ENCODE measurements at regions of chr9 and their contacts with region 1.

Region 1: DNA sequence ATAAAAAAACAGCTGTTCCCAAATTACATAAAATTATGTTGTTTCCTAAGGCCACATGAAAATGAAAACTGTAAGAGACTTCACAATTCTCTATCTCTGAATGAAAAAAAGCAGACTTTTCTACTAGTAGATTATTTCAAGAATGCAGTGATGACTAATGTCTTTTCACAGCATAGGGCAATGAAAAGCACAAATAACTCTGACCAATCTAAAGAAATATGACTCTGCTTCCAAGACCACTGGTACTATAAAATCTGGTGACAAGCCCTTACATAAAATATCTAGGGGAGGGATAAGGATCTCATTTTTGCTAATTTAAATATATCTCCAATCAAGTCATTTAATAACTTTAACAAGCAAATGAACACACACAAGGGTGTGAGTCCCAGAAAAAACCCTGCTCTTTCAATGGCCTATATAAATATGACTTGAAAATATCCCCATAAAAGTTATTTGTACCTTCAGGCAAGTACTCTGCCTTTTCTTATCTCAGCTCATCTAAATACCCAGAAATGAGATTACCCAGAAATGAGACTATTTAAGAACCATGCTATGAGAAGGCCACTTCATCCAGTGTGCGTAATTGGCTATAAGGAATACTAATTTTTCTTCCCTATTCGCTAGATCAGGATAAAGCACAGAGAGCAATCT is 105.2 kb downstream of the GNAQ start:
- DNase-seq: no peak
- H3K4me3 ChIP-seq: no peak overlapping the region
- H3K27ac ChIP-seq: no peak overlapping the region
- H3K4me1 ChIP-seq: peaks cover 5% of the 10 kb centered on the region
- H3K27me3 ChIP-seq: no peaks in the 10 kb centered on the region
- CTCF ChIP-seq: no peak
- EP300 ChIP-seq: no peak
- POLR2A ChIP-seq: no peak

Region 2: DNA sequence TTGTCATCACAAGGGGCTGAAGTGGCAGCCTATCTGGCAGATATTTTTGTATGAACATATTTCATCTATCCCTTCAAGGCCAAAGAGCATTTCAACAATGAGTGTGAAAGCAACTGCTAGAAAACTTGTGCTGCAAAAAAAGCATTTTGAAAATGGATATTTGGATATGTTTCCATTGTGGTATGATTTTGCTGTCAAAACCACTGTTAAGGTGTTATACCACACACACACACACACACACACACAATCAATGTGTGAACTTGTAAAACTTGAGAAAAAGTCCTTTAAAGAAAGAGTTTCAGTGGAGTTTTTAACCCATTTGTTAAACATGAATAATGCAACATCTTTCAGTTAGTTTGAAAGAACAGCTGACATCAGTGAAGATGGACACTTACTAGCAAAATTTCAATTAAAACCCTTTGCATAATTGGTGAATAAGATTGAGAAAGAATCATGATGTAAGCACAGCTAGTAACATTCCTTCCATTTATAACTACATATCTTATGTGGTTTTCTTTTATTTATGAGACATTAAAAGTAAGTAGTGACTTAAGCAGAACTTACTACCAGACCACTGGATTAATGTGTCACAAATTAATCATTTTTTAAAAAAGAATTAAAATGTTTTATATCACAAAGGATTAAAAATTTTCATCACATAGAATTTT is 95.7 kb before region 1 on chr9:
- intact Hi-C with region 1: no loop called
- DNase-seq: no peak
- H3K4me3 ChIP-seq: no peak overlapping the region
- H3K27ac ChIP-seq: peak overlapping the region in 1 of 2 donors; percentile 31
- H3K4me1 ChIP-seq: peaks cover 14% of the 10 kb centered on the region
- H3K27me3 ChIP-seq: no peaks in the 10 kb centered on the region
- CTCF ChIP-seq: no peak
- EP300 ChIP-seq: no peak
- POLR2A ChIP-seq: no peak

Region 3: GRCh38 chr9:77841739-77842386 is 84.6 kb before region 1 on chr9:
- intact Hi-C with region 1: loop called in 1 of 4 experiments (anchors 10 kb)
- DNase-seq: no peak
- H3K4me3 ChIP-seq: no peak overlapping the region
- H3K27ac ChIP-seq: no peak overlapping the region
- H3K4me1 ChIP-seq: peaks cover 5% of the 10 kb centered on the region
- H3K27me3 ChIP-seq: no peaks in the 10 kb centered on the region
- CTCF ChIP-seq: peak in 1 of 3 donors; percentile 23
- EP300 ChIP-seq: no peak
- POLR2A ChIP-seq: no peak

Region 4: GRCh38 chr9:77952642-77953328 is 26.4 kb after region 1 on chr9:
- intact Hi-C with region 1: no loop called
- DNase-seq: no peak
- H3K4me3 ChIP-seq: no peak overlapping the region
- H3K27ac ChIP-seq: peak overlapping the region in 1 of 2 donors; percentile 49
- H3K4me1 ChIP-seq: peaks cover 21% of the 10 kb centered on the region
- H3K27me3 ChIP-seq: no peaks in the 10 kb centered on the region
- CTCF ChIP-seq: no peak
- EP300 ChIP-seq: no peak
- POLR2A ChIP-seq: no peak

Measured in ovary (tissue), 10 donors.